ENCODE measurements at regions of chr19 and their contacts with region 1.

Region 1: DNA sequence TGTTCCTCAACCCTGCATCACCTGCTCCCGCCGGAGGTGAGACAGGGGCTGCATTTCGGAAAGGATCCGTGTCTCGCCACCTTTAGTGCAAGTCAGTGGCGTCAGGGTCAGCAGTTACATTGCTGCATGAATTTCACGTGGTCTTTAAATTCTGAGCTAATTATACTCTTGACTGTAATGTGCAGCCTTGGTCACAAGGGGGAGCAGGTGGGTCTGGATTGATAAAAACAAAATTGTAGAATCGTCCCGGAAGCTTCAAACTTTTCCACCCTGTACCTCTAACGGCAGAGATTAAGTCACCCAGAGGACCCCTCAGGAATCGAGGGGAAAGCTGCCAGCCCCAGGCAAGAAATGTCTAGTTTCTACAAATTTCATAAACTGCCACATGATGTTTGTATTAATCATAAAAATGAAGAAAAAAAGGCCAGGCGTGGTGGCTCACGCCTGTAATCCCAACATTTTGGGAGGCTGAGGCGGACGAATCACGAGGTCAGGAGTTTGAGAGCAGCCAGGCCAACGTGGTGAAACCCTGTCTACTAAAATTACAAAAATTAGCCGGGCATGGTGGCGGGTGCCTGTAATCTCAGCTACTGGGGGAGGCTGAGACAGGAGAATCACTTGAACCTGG is 20.2 kb downstream of the BBC3 start:
- DNase-seq: peak; percentile 77 to 85
- ATAC-seq: peak; percentile 61 to 63
- H3K4me3 ChIP-seq: no peak overlapping the region
- H3K27ac ChIP-seq: peak overlapping the region; percentile 76 to 82
- H3K4me1 ChIP-seq: peaks cover 16% of the 10 kb centered on the region
- CTCF ChIP-seq: peak; percentile 92
- EP300 ChIP-seq: no peak
- POLR2A ChIP-seq: no peak
- RAD21 ChIP-seq: peak; percentile 85 to 88

Region 2: GRCh38 chr19:47143322-47144073 is 67.3 kb before region 1 on chr19:
- CTCF ChIA-PET with region 1: interaction called, 72 read pairs
- POLR2A ChIA-PET with region 1: no interaction called
- DNase-seq: no peak
- ATAC-seq: no peak
- H3K4me3 ChIP-seq: no peak overlapping the region
- H3K27ac ChIP-seq: peak overlapping the region in 1 of 2 experiments; percentile 29; a peak in 3 of 6 replicates
- H3K4me1 ChIP-seq: peaks cover 34% of the 10 kb centered on the region
- CTCF ChIP-seq: no peak
- EP300 ChIP-seq: no peak
- POLR2A ChIP-seq: no peak
- RAD21 ChIP-seq: no peak

Region 3: GRCh38 chr19:47176627-47177090 is 34.1 kb before region 1 on chr19:
- CTCF ChIA-PET with region 1: interaction called, 20 read pairs
- POLR2A ChIA-PET with region 1: no interaction called
- DNase-seq: no peak
- ATAC-seq: no peak
- H3K4me3 ChIP-seq: no peak overlapping the region
- H3K27ac ChIP-seq: no peak overlapping the region
- H3K4me1 ChIP-seq: peaks cover 11% of the 10 kb centered on the region; the same call in 2 of the 3 replicates
- CTCF ChIP-seq: no peak
- EP300 ChIP-seq: no peak
- POLR2A ChIP-seq: no peak
- RAD21 ChIP-seq: no peak

Region 4: GRCh38 chr19:47195434-47195833 is 15.4 kb before region 1 on chr19:
- CTCF ChIA-PET with region 1: interaction called, 114 read pairs
- POLR2A ChIA-PET with region 1: interaction called, 4 read pairs
- DNase-seq: no peak
- ATAC-seq: no peak
- H3K4me3 ChIP-seq: no peak overlapping the region
- H3K27ac ChIP-seq: no peak overlapping the region
- H3K4me1 ChIP-seq: peaks cover 11% of the 10 kb centered on the region
- CTCF ChIP-seq: no peak
- EP300 ChIP-seq: no peak
- POLR2A ChIP-seq: no peak
- RAD21 ChIP-seq: no peak

Region 5: DNA sequence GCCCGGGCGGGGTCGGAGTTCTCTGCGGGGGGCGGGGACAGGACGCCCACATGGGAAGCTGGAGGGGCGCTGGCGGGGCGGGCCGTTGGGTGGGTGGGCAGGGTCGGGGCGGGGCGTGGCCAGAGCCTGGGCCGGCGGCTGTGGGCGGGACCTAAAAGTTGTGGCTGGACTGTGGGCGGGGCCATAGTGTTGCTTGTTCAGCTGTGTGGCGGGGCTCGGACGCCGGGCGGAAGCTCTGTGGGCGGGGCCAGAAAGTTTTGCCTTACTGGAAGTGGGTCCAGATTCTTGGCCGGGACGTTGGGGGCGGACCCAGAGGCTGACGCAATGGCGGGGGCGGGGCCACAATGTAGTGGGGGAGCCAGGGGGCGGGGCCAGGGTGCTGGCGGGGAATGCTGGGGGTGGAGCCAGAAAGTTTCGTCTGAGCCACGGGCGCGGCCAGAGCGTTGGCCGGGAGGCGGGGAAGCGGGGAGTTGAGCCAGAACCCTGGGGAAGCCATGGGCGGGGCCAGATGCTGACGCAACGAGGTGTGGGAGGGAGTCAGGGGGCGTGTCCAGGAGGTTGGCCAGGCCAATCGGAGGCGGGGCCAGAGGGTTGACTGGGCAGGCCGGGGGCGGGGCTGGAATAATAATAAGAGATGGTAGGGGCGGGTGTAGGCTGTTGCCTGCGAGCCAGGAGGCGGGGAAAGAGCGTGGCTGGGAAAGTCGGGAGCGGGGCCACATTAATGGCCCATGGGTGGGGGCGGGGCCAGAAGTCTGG is 46.1 kb after region 1 on chr19:
- CTCF ChIA-PET with region 1: interaction called, 893 read pairs
- POLR2A ChIA-PET with region 1: interaction called, 19 read pairs
- DNase-seq: peak; percentile 99 to 100
- ATAC-seq: peak; percentile 71 to 85
- H3K4me3 ChIP-seq: peak overlapping the region; percentile 61
- H3K27ac ChIP-seq: peak overlapping the region; percentile 91 to 92
- H3K4me1 ChIP-seq: peaks cover 30% of the 10 kb centered on the region
- CTCF ChIP-seq: no peak
- EP300 ChIP-seq: no peak
- POLR2A ChIP-seq: no peak
- RAD21 ChIP-seq: no peak

Measured in A549 (cell line).